GM10248 (cell line): ENCODE measurements at regions of chr11 and their contacts with region 1.

Region 1: DNA sequence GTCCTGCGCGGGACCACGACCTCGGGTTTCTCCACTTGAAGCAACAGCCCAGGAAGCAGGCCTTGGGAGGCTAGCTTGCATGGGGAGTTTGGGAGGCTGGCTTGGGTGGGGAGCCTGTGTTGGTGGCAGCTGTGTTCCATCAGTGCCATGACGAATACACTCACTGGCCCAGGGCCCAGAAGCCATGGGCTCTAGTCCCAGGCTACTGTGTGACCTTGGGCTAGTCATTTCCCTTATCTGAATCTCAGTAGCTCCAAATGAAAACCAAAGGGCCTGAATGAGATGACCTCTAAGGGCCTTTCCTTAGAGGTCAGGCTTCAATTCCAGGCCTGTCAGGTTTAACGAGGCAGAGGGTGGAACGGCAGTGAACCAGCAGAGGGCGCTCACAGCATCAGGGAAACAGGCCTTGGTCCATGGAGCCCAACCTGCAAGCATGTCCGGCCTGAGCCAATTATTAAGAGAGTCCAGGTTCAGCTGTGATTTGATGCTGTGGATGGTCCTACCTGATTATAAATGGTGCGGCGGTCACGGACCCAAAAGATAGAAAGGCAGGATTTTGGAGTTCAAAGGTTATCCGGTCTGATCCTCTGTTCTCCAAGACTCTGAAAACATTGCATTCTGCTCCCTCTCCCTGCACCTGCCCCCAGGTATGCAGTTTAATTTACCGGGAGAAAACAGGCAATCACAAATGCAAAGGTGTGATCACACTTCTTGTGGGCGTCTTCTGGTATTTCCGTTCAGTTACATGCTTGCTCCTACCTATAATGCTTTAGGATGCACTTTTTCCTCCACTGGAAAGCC is 15.9 kb downstream of the PTPN5 start:
- DNase-seq: peak; percentile 79
- CTCF ChIP-seq: peak; percentile 93

Region 2: GRCh38 chr11:18684267-18684666 is 91.4 kb before region 1 on chr11:
- CTCF ChIA-PET with region 1: no interaction called
- POLR2A ChIA-PET with region 1: no interaction called
- DNase-seq: no peak
- CTCF ChIP-seq: no peak

Region 3: GRCh38 chr11:18794956-18795355 is 19.3 kb after region 1 on chr11:
- CTCF ChIA-PET with region 1: interaction called, 16 read pairs
- POLR2A ChIA-PET with region 1: no interaction called
- DNase-seq: no peak
- CTCF ChIP-seq: no peak

Region 4: DNA sequence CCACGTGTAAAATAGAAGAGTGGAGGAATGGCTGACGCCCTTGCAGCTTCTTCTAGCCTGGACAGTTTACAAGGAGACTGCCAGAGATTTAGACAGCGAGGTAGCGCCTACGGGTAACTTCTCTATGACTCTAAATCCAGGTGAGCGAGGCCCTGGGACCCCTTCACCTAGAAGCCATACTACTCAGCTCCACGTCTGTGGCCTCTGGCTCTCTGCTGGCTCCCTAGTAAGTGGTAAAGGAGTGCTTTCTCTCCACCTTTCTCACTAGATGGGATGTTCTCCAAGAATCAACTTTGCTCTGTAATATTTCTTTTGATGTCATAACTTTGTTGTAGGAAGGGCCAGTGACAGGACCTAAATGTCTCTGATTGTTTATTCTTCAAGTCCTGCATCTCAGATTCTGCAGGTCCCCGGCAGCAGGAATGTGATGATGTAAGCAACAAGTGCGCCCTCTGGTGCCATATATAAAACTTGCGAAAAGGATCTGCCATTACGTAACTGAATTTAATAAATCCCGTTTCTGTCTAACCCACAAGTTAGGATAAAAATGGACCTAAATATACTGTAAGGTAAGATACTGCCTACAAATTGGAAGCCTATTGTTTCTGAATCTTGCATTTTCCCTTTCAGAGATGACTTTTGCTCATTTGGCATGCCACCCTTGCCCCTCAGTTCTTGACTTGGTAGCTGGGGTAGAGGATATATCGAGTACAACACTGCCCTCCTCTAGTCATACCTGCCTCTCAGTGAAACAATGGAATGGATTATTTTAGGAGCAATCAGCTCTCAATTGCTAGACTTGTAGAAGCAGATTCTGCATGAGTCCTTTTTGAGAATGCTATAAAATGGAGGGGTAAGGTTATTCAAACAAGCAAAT is 26.9 kb after region 1 on chr11:
- CTCF ChIA-PET with region 1: interaction called, 20 read pairs
- POLR2A ChIA-PET with region 1: no interaction called
- DNase-seq: peak; percentile 53
- CTCF ChIP-seq: peak; percentile 52

Region 5: DNA sequence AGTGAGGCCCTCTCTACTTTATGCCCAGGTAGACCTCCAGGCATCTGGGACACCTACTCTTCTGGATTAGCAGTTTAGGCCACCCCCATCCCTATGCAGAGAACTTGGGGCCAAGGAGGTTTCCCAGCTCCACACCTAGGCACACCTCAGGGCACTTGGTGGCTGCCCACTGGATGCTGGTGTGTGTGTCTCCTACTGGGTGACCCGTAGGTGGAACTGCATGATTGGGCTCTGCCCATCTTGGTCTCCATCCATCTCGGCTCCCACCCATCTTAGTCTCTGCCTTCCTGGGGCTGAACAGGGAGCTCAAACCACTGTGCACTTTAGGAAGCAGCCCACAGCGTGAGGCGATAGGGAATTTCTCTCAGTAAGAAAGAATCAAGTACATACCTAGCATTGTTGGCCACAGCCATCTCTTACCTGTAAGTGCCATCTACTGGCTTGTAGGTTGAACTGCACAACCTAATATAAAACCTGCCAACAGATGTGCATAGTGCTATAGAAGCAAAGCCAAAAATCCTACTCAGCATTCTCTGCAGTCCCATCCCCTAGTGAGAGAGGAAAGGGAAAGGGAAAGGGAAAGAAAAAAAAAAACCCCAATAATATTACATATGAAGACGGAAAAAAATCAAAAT is 77.5 kb after region 1 on chr11:
- CTCF ChIA-PET with region 1: interaction called, 18 read pairs
- POLR2A ChIA-PET with region 1: no interaction called
- DNase-seq: peak; percentile 30
- CTCF ChIP-seq: peak; percentile 46